HCT116 (cell line): ENCODE measurements at regions of chr4 and their contacts with region 1.

Region 1: GRCh38 chr4:14871676-14872430 is 130.4 kb upstream of the CPEB2 start:
- DNase-seq: peak; percentile 2
- ATAC-seq: peak; percentile 74
- H3K4me3 ChIP-seq: no peak overlapping the region
- H3K27ac ChIP-seq: no peak overlapping the region
- H3K4me1 ChIP-seq: no peaks in the 10 kb centered on the region
- H3K27me3 ChIP-seq: peaks cover 5% of the 10 kb centered on the region; the same call in 1 of the 2 replicates
- CTCF ChIP-seq: peak in 2 of 3 experiments; percentile 41 to 45; a peak in 4 of 6 replicates
- POLR2A ChIP-seq: no peak
- RAD21 ChIP-seq: no peak

Region 2: DNA sequence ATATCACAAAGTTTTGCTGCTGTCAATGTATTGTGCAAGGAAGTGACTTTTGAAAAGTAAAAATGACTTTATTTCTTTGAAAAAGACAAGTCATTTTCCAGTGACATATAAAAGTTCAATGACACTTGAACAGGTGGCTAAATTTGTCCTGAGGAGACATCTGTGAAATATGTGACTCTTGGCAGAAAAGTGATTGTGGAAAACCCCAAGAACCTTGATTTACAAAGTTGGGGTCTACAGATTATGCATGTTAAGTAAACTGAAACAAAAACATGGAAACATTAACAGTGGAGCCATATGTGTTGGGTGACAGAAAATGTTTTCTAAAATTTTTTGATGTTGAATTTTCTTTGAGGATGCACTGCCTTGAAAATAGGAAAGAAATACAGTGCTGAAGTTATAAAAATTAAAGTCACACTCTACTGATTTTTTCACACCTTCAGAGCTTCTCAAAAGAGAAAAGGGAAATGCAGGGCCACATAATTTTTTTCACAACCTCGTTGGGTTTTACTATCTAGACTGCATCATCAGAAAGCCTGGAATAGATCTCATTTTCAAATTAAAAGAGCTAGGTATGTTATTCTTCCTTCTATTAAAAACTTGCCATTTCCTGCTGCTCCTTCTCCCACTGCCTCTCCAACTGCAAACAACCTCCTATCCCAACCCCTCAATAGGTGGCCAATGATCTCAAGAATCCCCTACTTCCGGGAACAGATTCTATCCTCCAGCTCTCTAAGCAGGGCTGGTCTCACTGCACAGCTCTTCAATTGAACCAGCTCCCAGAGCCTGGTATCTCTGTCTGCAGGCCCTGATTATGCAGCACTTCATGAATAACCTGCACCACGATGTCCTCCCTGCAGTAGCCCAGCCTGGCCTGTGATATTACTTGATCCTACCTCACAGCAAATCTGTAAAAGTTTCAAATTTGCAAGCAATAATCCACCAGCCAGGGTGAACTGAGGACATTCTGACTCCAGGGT is 440.4 kb before region 1 on chr4:
- CTCF ChIA-PET with region 1: no interaction called
- POLR2A ChIA-PET with region 1: no interaction called
- RAD21 ChIA-PET with region 1: no interaction called
- intact Hi-C with region 1: no loop called
- DNase-seq: no peak
- ATAC-seq: no peak
- H3K4me3 ChIP-seq: no peak overlapping the region
- H3K27ac ChIP-seq: no peak overlapping the region
- H3K4me1 ChIP-seq: no peaks in the 10 kb centered on the region
- H3K27me3 ChIP-seq: no peaks in the 10 kb centered on the region
- CTCF ChIP-seq: no peak
- POLR2A ChIP-seq: no peak
- RAD21 ChIP-seq: no peak

Region 3: GRCh38 chr4:15162465-15163283 is 290.8 kb after region 1 on chr4:
- CTCF ChIA-PET with region 1: no interaction called
- POLR2A ChIA-PET with region 1: no interaction called
- RAD21 ChIA-PET with region 1: no interaction called
- intact Hi-C with region 1: loop called (anchors 5 kb)
- DNase-seq: no peak
- ATAC-seq: peak; percentile 66
- H3K4me3 ChIP-seq: no peak overlapping the region
- H3K27ac ChIP-seq: no peak overlapping the region
- H3K4me1 ChIP-seq: peaks cover 0 to 5% of the 10 kb centered on the region in 2 experiments; a peak in 1 of 4 replicates
- H3K27me3 ChIP-seq: 0 out of 2 replicates have a peak, but pooled peaks cover 5% of the 10 kb centered on the region
- CTCF ChIP-seq: peak; percentile 25 to 51 (median 39); a peak in 5 of 6 replicates
- POLR2A ChIP-seq: no peak
- RAD21 ChIP-seq: peak; percentile 59